Transverse colon (tissue), 4 donors: ENCODE measurements at regions of chr2 and their contacts with region 1.

Region 1: GRCh38 chr2:60302377-60303141 is 250.9 kb downstream of the BCL11A start:
- DNase-seq: no peak
- H3K4me3 ChIP-seq: no peak overlapping the region
- H3K27ac ChIP-seq: no peak overlapping the region
- H3K4me1 ChIP-seq: peaks cover 0 to 33% (median 9%) of the 10 kb centered on the region in 4 donors
- H3K27me3 ChIP-seq: no peaks in the 10 kb centered on the region
- CTCF ChIP-seq: no peak
- EP300 ChIP-seq: no peak
- POLR2A ChIP-seq: no peak

Region 2: DNA sequence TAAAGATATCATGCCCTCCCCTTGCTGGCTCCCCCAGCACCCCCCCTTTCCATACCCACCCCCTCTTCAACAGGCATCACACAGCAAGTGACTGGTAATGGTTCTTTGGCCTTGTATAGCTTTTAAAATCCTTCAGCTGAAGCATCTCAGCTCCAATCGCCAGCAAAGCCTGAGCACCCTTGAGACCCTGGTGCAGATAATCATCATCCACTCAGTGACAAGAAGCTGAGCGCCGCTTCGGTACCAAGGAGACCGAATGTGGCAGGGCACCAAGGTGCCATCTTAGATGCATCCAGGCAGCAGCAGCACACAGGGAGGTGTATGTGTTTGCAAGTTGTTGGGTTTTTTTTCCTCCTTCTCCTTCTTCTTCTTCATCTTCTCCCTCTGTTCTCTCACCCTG is 18.2 kb after region 1 on chr2:
- in situ Hi-C with region 1: no loop called
- intact Hi-C with region 1: loop called (anchors 1 kb)
- DNase-seq: no peak
- H3K4me3 ChIP-seq: no peak overlapping the region
- H3K27ac ChIP-seq: no peak overlapping the region
- H3K4me1 ChIP-seq: peaks cover 0 to 14% (median 0%) of the 10 kb centered on the region in 4 donors
- H3K27me3 ChIP-seq: no peaks in the 10 kb centered on the region
- CTCF ChIP-seq: no peak
- EP300 ChIP-seq: no peak
- POLR2A ChIP-seq: no peak